ENCODE measurements at regions of chr6 and their contacts with region 1.

Region 1: GRCh38 chr6:109073344-109074132 is 21.1 kb downstream of the SESN1 start:
- DNase-seq: peak; percentile 79 to 89 (median 85)
- H3K4me3 ChIP-seq: no peak overlapping the region
- H3K27ac ChIP-seq: no peak overlapping the region
- H3K4me1 ChIP-seq: peaks cover 4 to 30% (median 15%) of the 10 kb centered on the region in 4 experiments
- H3K27me3 ChIP-seq: no peaks in the 10 kb centered on the region

Region 2: GRCh38 chr6:108541838-108542759 is 531.4 kb before region 1 on chr6:
- CTCF ChIA-PET with region 1: interaction called, 106 read pairs
- POLR2A ChIA-PET with region 1: interaction called, 4 read pairs
- DNase-seq: peak; percentile 85 to 93 (median 92)
- H3K4me3 ChIP-seq: peak overlapping the region in 5 of 7 experiments; percentile 30 to 71 (median 42)
- H3K27ac ChIP-seq: no peak overlapping the region
- H3K4me1 ChIP-seq: peaks cover 3 to 31% (median 23%) of the 10 kb centered on the region in 4 experiments
- H3K27me3 ChIP-seq: no peaks in the 10 kb centered on the region

Region 3: GRCh38 chr6:108699290-108700041 is 374.1 kb before region 1 on chr6:
- CTCF ChIA-PET with region 1: no interaction called
- POLR2A ChIA-PET with region 1: no interaction called
- DNase-seq: no peak
- H3K4me3 ChIP-seq: no peak overlapping the region
- H3K27ac ChIP-seq: no peak overlapping the region
- H3K4me1 ChIP-seq: peaks cover 0 to 2% (median 0%) of the 10 kb centered on the region in 4 experiments
- H3K27me3 ChIP-seq: no peaks in the 10 kb centered on the region

Region 4: GRCh38 chr6:108782179-108783041 is 291.1 kb before region 1 on chr6:
- CTCF ChIA-PET with region 1: interaction called, 12 read pairs
- POLR2A ChIA-PET with region 1: no interaction called
- DNase-seq: peak; percentile 85 to 91 (median 88)
- H3K4me3 ChIP-seq: peak overlapping the region in 6 of 7 experiments; percentile 54 to 92 (median 72)
- H3K27ac ChIP-seq: no peak overlapping the region
- H3K4me1 ChIP-seq: peaks cover 0 to 20% (median 6%) of the 10 kb centered on the region in 4 experiments
- H3K27me3 ChIP-seq: no peaks in the 10 kb centered on the region

Region 5: DNA sequence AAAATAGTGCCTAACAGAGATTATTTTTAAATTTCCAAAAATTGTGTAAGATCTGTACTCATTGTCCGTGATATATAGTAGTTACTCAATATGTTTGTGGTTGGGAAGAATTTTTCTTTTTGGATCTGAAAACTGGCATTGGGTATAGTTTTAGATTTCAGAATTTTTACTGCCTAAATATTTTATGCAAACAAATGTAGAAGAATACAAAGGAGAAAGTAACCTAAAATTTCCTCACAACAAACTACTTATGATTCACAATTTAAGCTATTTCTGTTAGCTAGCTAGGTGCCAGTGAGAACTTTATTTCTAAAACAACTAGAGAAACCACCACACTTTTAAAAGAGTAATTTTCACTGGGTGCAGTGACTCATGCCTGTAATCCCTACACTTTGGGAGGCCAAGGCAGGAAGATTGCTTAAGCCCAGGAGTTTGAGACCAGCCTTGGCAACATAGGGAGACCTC is 17.7 kb before region 1 on chr6:
- CTCF ChIA-PET with region 1: interaction called, 10 read pairs
- POLR2A ChIA-PET with region 1: interaction called, 4 read pairs
- DNase-seq: no peak
- H3K4me3 ChIP-seq: no peak overlapping the region
- H3K27ac ChIP-seq: no peak overlapping the region
- H3K4me1 ChIP-seq: peaks cover 7 to 22% (median 13%) of the 10 kb centered on the region in 4 experiments
- H3K27me3 ChIP-seq: no peaks in the 10 kb centered on the region

Region 6: DNA sequence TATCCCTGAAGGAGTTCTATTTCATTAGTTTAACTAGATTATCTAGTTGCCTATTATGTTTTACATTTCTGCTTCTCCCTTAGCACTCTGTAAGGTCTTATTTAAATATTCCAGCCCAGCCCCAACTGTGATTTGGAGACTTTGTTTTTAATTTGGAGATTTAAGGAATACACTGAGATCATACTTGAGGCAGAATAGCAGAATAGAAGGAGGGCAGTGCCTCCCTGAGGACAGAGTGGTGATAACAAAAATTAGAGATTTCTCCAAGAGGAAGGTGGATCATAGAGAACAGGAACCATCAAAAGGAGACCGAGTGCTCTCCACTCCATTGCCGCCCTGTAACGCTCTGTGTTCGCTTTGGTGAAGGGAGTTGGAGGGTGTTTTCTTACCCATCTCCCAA is 323.5 kb after region 1 on chr6:
- CTCF ChIA-PET with region 1: interaction called, 23 read pairs
- POLR2A ChIA-PET with region 1: no interaction called
- DNase-seq: peak; percentile 63 to 75 (median 65)
- H3K4me3 ChIP-seq: peak overlapping the region in 1 of 7 experiments; percentile 53
- H3K27ac ChIP-seq: no peak overlapping the region
- H3K4me1 ChIP-seq: peaks cover 0 to 28% (median 15%) of the 10 kb centered on the region in 4 experiments
- H3K27me3 ChIP-seq: no peaks in the 10 kb centered on the region